ENCODE measurements at regions of chr22 and their contacts with region 1.

Region 1: DNA sequence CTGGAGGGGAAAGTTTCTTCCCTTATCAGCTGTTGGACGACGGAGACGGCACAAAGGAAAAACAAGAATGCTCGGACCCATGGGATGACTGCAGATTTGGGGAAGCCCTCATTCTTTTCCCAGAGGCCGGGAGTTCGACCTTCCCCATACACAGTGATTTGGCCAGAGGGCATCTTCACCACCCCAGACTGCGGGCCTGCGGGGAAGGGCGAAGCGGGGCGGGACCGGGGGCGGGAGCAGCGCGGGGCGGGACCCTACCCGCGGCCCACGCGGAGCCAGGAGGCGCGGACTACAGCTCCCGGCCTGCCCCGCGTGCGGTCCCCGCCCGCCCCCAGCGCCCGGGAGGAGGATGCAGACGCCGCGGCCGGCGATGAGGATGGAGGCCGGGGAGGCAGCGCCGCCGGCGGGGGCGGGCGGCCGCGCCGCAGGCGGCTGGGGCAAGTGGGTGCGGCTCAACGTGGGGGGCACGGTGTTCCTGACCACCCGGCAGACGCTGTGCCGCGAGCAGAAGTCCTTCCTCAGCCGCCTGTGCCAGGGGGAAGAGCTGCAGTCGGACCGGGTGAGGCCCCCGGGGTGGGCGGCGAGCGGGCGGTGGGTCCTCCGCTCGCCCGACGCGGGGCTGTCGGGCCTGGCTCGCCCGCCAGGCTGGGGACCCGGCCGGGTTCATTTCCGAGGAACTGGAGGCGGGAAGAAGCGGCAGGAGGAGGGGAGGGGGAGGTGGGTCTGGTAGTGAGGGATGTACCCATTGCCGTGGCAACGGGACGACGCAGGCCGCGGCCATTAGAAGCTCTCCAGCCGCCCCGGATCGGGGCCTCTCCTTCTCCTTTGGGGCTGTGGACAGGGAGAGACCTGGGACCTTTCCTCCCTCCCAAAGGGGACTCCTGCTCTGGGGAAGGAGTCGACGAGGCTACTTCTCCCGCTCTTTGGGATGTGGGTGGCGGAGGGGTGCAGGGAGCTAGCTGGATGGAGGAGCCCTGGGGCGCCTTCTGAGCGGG is at the start of gene KCTD17:
- DNase-seq: peak; percentile 35 to 58 (median 56)
- ATAC-seq: peak; percentile 78
- H3K4me3 ChIP-seq: no peak within 1 kb of the TSS
- H3K27ac ChIP-seq: peak within 1 kb of the TSS in 1 of 4 donors; percentile 52
- H3K4me1 ChIP-seq: peaks cover 8% of the 10 kb centered on the region
- H3K27me3 ChIP-seq: no peaks in the 10 kb centered on the region
- CTCF ChIP-seq: no peak
- POLR2A ChIP-seq: no peak
- total RNA-seq, gene KCTD17: 3.6 to 8.3 TPM

Region 2: DNA sequence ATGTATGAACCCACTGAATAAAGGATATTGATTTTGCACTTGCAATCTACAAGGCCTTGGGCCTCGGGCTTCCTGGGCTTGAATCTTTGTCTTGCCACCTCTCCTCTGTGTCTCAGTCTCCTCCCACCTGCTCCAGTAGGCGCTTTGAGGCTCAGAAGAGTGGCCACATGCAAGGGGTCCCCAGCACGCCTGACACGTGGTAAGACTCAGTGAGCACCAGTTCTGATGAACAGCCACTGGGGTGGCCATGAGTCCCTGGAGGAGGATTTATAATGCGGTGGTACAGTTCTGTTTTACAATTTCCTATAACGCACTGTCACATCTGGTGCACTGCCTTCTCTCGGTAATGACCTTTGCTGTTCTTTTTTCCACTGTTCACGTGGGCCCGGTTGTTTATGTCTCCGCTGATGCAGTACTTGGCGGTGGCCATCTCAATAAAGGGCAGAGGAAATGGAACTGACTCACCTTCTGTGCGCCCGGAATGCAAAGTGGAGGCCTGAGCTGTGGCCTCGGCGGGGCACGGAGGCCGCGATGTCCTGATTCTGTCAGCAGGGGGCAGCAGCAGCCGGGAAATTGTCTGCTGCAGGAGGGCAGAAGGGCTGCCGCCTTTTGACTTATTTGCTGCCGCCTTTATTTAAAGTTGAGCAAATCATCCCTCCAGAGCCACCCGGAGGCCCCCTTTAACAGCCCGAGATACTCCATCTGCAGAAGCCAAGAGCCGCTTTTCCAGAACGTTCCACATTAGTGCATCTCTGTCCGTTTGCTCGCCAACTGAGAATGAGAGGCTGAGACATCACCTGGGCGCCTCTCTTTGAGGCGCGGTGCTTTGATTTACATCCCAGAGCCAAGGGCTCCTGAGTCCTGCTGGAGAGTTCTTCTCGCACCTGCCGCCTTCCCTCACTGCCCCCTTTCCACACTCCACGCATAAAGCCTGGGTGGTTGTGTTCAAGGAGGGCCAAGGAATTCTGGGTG is 269.7 kb before region 1 on chr22:
- intact Hi-C with region 1: loop called (anchors 10 kb)
- DNase-seq: peak; percentile 77 to 82 (median 81)
- ATAC-seq: peak; percentile 93
- H3K4me3 ChIP-seq: no peak overlapping the region
- H3K27ac ChIP-seq: no peak overlapping the region
- H3K4me1 ChIP-seq: peaks cover 3% of the 10 kb centered on the region
- H3K27me3 ChIP-seq: no peaks in the 10 kb centered on the region
- CTCF ChIP-seq: peak; percentile 77 to 98 (median 91)
- POLR2A ChIP-seq: no peak

Region 3: GRCh38 chr22:36860821-36861659 is 190.6 kb before region 1 on chr22 and contains the start of gene NCF4:
- intact Hi-C with region 1: loop called (anchors 10 kb)
- DNase-seq: peak; percentile 19 to 84 (median 37)
- ATAC-seq: no peak
- H3K4me3 ChIP-seq: no peak within 1 kb of the TSS
- H3K27ac ChIP-seq: peak within 1 kb of the TSS in 2 of 4 donors; percentile 12 to 63
- H3K4me1 ChIP-seq: no peaks in the 10 kb centered on the region
- H3K27me3 ChIP-seq: no peaks in the 10 kb centered on the region
- CTCF ChIP-seq: no peak
- POLR2A ChIP-seq: peak in 2 of 3 donors; percentile 20 to 62
- total RNA-seq, gene NCF4: 5.9 to 6.0 TPM

Measured in body of pancreas (tissue), 4 donors.